Ovary (tissue), 10 donors: ENCODE measurements at regions of chr3 and their contacts with region 1.

Region 1: GRCh38 chr3:4584456-4585249 is 91.5 kb downstream of the ITPR1 start:
- DNase-seq: peak; percentile 51 to 68 (median 57)
- H3K4me3 ChIP-seq: peak overlapping the region; percentile 31
- H3K27ac ChIP-seq: peak overlapping the region; percentile 5 to 85
- H3K4me1 ChIP-seq: peaks cover 28% of the 10 kb centered on the region
- H3K27me3 ChIP-seq: no peaks in the 10 kb centered on the region
- CTCF ChIP-seq: no peak
- EP300 ChIP-seq: no peak
- POLR2A ChIP-seq: no peak

Region 2: DNA sequence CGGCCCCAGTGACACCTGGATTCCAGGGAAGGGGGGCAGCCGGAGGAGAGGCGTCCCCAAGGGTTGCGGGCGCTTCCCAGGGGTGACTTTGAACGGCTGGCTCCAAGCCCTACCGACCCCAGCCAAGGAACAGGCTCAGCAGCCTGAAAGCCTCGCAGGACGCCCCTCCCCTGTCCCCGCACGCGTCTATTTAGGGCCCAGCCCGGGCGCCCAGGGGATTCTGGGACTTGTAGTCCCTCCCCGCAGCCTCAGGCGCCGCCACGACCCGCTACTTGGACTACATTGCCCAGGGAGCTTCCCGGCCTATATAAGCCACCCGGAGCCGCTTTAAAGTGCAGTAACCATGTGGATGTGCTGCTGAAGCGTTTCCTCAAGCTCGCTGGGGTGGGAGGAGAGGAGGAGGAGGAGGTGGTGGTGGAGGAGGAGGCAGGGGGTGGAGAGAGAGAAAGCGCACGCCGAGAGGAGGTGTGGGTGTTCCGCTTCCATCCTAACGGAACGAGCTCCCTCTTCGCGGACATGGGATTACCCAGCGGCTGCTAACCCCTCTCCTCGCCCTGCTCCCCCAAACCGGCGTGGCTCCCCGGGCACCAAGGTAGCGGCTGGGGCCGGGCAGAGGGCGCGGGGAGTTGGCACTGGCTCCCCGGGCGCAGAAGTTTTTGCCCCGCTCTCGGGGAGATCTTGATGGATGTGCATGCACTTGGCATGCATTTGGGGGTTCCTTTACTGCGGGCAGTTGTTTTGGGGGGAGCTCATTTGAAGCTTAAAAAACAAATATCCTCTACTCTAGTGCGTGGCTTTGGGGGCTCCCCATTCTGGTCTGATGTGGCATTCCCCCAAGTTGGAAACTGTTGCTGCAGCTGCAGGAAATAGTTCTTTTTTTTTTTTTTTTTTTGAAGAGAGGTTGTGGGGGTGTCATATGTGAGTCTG is 91.4 kb before region 1 on chr3 and contains the start of gene ITPR1:
- intact Hi-C with region 1: loop called in 2 of 4 experiments (anchors 5 kb)
- DNase-seq: peak; percentile 98 to 99 (median 99)
- H3K4me3 ChIP-seq: peak within 1 kb of the TSS; percentile 94
- H3K27ac ChIP-seq: peak within 1 kb of the TSS; percentile 48 to 72
- H3K4me1 ChIP-seq: peaks cover 4% of the 10 kb centered on the region
- H3K27me3 ChIP-seq: no peaks in the 10 kb centered on the region
- CTCF ChIP-seq: peak in 1 of 3 donors; percentile 49
- EP300 ChIP-seq: no peak
- POLR2A ChIP-seq: peak; percentile 100
- total RNA-seq, gene ITPR1: 78.5 to 313 (median 146) TPM